ENCODE measurements at regions of chr1 and their contacts with region 1.

Region 1: DNA sequence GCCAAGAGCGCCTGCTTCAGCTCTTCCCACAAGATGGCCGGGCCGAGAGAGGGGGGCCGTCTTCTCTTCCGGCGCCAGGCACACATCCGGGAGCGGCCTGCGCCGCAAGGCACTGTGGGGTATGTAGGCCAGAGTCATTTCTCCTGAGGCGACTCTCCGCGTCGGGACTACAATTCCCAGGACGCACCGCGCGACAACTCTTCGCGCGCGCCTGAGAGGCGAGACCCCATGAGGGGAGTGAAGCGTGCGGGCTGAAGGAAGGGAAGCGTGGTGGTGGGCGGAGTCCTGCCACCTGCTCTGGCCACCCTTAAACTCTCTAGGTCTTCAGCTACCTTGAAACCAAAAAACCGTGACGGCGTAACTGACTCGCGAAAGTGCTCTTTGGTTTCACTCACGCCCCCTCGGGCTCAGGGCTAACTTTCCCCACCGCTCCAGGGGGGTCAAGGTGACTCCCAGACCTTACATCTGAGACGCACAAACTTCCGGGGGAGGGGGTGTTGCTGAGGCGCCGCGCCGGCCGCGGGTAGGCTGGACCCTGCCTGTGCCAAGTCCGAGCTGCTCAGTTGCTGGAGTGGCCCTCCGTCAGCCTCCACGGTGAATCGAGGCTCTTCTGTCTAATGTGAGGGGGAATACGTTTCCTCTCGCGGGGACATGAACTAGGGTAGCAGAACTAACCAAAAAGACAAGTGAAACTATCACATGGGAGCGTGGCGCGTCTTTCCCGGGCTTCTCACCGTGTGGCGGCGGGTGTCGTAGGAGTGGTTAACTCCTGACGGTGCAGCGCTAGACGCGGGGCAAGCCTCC is at the start of gene SERBP1:
- DNase-seq: peak; percentile 97
- H3K4me3 Mint-ChIP-seq: peak within 1 kb of the TSS; percentile 83
- H3K27ac Mint-ChIP-seq: peak within 1 kb of the TSS; percentile 97
- H3K4me1 Mint-ChIP-seq: peaks cover 50% of the 10 kb centered on the region
- H3K27me3 Mint-ChIP-seq: no peaks in the 10 kb centered on the region
- total RNA-seq, gene SERBP1: 388 to 398 TPM

Region 2: DNA sequence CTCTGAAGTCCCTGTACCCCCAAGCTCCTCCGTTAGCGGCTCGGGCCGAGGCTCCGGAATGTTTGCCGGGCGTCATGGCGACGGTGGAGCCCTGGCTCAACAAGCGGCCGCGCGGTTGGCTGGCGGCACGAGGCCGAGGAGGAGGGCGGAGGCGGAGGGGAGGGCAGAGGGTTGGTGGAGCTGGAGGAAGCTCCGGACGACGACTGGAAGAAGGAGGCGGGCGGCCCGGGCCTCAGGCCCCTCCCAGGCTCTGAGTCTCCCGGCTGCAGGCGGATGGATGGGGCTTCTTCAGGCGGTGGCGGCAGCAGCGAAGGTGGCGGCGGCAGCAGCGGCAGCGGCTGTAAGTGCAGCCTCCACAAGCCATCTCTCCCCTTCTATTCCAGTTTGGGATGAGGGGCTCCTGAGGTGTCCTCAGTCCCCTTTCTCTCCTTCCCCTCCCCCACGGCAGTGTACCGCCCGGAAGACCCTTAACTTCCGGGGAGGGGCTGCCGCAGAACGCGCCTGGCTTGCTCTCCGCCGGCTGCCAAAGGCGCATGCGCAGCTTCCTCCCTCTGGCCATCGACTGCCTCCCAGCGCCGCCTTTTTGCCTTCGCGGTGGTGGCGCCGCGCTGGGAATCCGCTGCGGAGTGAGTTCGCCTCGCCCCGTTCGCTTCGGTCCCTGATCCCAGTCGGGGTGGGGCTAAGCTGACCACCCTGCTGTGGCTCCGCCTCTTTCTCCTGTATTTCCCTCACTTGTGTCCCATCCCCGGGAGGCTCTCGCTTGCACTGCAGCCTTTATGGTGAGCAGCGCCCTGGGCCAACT is 505.6 kb before region 1 on chr1 and contains the starts of genes DNAI4 and MIER1:
- CTCF ChIA-PET with region 1: no interaction called
- POLR2A ChIA-PET with region 1: no interaction called
- intact Hi-C with region 1: loop called (anchors 1 kb)
- DNase-seq: peak; percentile 99
- H3K4me3 Mint-ChIP-seq: peak within 1 kb of the TSS; percentile 97
- H3K27ac Mint-ChIP-seq: peak within 1 kb of the TSS; percentile 96
- H3K4me1 Mint-ChIP-seq: peaks cover 53% of the 10 kb centered on the region
- H3K27me3 Mint-ChIP-seq: no peaks in the 10 kb centered on the region
- total RNA-seq, gene DNAI4: 1.4 to 1.6 TPM
- total RNA-seq, gene MIER1: 54.7 to 58.8 TPM

Region 3: GRCh38 chr1:67053785-67054772 is 376.5 kb before region 1 on chr1 and contains the start of gene SLC35D1:
- CTCF ChIA-PET with region 1: no interaction called
- POLR2A ChIA-PET with region 1: interaction called, 4 read pairs
- intact Hi-C with region 1: loop called (anchors 2 kb)
- DNase-seq: peak; percentile 84
- H3K4me3 Mint-ChIP-seq: peak within 1 kb of the TSS; percentile 85
- H3K27ac Mint-ChIP-seq: peak within 1 kb of the TSS; percentile 87
- H3K4me1 Mint-ChIP-seq: peaks cover 24% of the 10 kb centered on the region
- H3K27me3 Mint-ChIP-seq: no peaks in the 10 kb centered on the region
- total RNA-seq, gene SLC35D1: 11.0 to 11.1 TPM

Region 4: DNA sequence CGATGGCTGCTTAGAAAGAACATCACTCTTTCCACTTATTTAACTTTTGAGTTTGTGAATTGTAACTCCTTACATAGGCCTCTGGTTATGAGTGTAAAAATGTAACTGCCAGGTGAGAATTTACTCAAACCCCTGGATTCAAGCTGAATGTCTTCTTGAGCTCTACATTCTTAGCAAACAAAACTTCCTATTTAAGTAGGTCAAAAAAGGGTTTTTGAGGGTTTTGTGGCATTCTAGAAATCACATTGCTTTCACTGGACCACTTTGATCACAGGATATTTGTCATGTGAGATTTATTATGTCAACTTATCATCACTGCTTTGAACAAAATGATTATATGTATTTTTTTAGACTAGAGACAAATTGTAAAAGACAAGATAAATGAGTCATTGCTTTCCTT is 258.6 kb before region 1 on chr1:
- CTCF ChIA-PET with region 1: no interaction called
- POLR2A ChIA-PET with region 1: interaction called, 19 read pairs
- intact Hi-C with region 1: loop called (anchors 2 kb)
- DNase-seq: no peak
- H3K4me3 Mint-ChIP-seq: peak overlapping the region; percentile 74
- H3K27ac Mint-ChIP-seq: peak overlapping the region; percentile 99
- H3K4me1 Mint-ChIP-seq: peaks cover 72% of the 10 kb centered on the region
- H3K27me3 Mint-ChIP-seq: peaks cover 5% of the 10 kb centered on the region

Region 5: GRCh38 chr1:67332653-67333529 is 97.7 kb before region 1 on chr1:
- CTCF ChIA-PET with region 1: no interaction called
- POLR2A ChIA-PET with region 1: interaction called, 11 read pairs
- intact Hi-C with region 1: loop called (anchors 1 kb)
- DNase-seq: no peak
- H3K4me3 Mint-ChIP-seq: peak overlapping the region; percentile 9
- H3K27ac Mint-ChIP-seq: peak overlapping the region; percentile 82
- H3K4me1 Mint-ChIP-seq: peaks cover 80% of the 10 kb centered on the region
- H3K27me3 Mint-ChIP-seq: no peaks in the 10 kb centered on the region

Region 6: GRCh38 chr1:67441183-67441582 is 10.6 kb after region 1 on chr1:
- CTCF ChIA-PET with region 1: no interaction called
- POLR2A ChIA-PET with region 1: interaction called, 4 read pairs
- intact Hi-C with region 1: loop called (anchors 1 kb)
- DNase-seq: peak; percentile 44
- H3K4me3 Mint-ChIP-seq: no peak overlapping the region
- H3K27ac Mint-ChIP-seq: no peak overlapping the region
- H3K4me1 Mint-ChIP-seq: peaks cover 12% of the 10 kb centered on the region
- H3K27me3 Mint-ChIP-seq: peaks cover 2% of the 10 kb centered on the region

Region 7: DNA sequence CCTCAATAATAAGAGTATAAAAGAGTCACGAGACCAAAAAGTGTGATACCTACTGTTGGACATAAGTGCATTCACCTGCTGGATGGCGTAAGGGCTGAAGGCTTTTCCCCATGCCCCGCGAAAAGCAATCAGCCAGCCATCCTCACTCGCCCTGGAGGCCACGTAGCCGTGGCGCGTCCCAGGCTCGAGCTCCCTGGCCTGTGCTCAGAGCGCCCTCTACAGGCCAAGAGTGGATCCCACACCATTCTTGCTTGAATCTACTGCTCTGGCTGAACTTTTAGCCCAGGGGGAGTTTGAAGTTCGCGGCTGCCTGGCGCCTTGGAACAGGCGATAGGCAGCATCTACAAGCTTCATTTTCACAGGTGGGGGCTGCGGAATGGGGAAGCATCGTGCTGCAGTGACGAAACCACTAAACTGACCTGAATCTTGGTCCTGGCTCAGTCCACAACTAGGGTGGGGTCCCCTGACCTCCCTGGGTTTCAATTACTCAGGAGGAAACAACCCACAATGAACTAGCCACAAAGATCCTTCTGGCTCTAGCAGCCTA is 69.9 kb after region 1 on chr1:
- CTCF ChIA-PET with region 1: interaction called, 13 read pairs
- POLR2A ChIA-PET with region 1: interaction called, 3 read pairs
- intact Hi-C with region 1: loop called (anchors 2 kb)
- DNase-seq: peak; percentile 93
- H3K4me3 Mint-ChIP-seq: no peak overlapping the region
- H3K27ac Mint-ChIP-seq: no peak overlapping the region
- H3K4me1 Mint-ChIP-seq: peaks cover 2% of the 10 kb centered on the region
- H3K27me3 Mint-ChIP-seq: peaks cover 6% of the 10 kb centered on the region